AG04450 (cell line): ENCODE measurements at regions of chr7 and their contacts with region 1.

Region 1: GRCh38 chr7:144113651-144114050 is 4.3 kb downstream of the OR2A2 start:
- DNase-seq: no peak
- H3K4me3 ChIP-seq: no peak overlapping the region
- H3K27ac ChIP-seq: no peak overlapping the region
- H3K27me3 ChIP-seq: no peaks in the 10 kb centered on the region
- CTCF ChIP-seq: no peak

Region 2: DNA sequence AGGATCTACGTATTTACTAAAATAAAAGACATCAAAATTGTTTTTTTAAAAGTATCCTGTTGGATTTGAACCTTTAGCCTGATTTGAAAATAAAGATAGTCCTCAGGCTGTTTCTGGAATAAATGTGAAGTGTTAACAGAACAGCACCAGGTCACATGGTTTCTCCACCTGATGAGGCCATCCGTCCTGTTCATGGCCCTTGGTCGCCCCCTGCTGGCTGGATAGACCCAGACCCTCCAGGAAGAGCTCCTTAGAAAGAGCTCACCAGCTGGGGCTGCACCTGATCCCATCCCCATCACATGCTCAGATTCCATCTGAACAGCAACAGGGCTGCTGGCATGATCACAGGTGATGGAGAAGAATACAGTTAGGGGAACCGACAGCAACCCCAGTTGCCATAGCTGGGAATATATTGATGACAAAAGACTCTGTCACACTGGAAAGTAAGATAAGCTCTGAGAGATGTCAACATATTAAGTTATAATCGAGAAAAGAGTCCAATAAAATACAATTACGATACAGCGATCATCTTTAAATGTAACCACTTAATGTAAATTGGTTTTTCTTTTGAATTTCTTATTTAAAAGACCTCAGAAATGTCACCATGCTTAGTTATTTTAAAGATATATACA is 14.2 kb after region 1 on chr7:
- CTCF ChIA-PET with region 1: interaction called, 24 read pairs
- POLR2A ChIA-PET with region 1: no interaction called
- DNase-seq: peak; percentile 24
- H3K4me3 ChIP-seq: no peak overlapping the region
- H3K27ac ChIP-seq: no peak overlapping the region
- H3K27me3 ChIP-seq: no peaks in the 10 kb centered on the region
- CTCF ChIP-seq: peak; percentile 85